ENCODE measurements at regions of chr4 and their contacts with region 1.

Region 1: DNA sequence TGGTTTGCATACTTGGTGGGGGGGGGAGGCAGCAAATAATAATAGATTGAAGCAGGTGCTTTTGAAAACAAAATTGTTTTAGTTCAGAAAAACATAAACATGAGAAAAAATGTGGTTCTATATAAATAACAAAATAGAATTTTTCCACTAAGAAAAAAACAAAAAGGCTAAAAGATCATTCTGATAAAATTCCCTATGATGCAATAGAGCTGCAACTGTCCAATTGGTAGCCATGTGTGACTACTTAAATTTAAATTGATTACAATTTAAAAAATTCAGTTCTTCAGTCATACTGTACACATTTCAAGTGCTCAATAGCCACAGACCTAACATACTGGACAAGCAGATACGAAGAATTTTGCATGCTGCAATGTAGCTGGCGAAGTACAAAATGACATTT is 11.0 kb downstream of the TRMT10A start:
- DNase-seq: no peak
- H3K4me3 Mint-ChIP-seq: no peak overlapping the region
- H3K27ac Mint-ChIP-seq: no peak overlapping the region
- H3K4me1 Mint-ChIP-seq: no peaks in the 10 kb centered on the region
- H3K27me3 Mint-ChIP-seq: no peaks in the 10 kb centered on the region

Region 2: DNA sequence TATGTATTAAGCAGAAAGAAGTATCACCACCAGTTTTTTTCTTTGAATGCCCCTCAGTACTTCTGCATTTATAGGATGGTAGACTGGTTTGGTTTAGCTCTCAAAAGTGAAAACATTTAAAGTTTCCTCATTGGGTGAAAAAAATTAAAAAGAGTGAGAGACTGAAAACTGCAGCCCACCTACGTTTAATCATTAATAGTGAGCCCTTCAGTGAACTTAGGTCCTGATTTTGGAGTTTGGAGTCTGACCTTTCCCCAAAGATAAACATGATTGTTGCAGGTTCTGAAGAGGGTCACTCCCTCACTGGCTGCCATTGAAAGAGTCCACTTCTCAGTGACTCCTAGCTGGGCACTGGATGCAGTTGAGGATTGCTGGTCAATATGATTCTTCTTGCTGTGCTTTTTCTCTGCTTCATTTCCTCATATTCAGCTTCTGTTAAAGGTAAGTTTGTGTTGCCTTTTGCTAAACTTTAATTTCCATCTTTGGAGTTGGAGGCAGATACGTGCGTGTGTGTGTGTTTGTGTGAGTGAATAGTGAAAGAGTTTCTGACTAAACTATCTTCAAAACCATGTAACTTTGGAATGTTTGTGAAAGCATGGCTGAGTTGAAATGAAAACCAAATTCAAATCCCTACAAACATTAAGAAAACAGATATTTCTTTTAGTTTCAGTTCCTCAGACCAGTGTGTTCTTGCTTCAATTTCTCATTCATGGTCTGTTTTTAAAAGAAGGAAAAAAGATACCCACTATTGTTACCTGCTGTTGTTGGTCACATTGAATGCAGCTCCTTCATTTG is 21.9 kb after region 1 on chr4 and contains the start of gene MTTP:
- intact Hi-C with region 1: loop called (anchors 2 kb)
- DNase-seq: no peak
- H3K4me3 Mint-ChIP-seq: no peak within 1 kb of the TSS
- H3K27ac Mint-ChIP-seq: no peak within 1 kb of the TSS
- H3K4me1 Mint-ChIP-seq: no peaks in the 10 kb centered on the region
- H3K27me3 Mint-ChIP-seq: peaks cover 22% of the 10 kb centered on the region
- total RNA-seq, gene MTTP: 0.29 TPM in 1 of 2 replicates, not detected in the other

Region 3: DNA sequence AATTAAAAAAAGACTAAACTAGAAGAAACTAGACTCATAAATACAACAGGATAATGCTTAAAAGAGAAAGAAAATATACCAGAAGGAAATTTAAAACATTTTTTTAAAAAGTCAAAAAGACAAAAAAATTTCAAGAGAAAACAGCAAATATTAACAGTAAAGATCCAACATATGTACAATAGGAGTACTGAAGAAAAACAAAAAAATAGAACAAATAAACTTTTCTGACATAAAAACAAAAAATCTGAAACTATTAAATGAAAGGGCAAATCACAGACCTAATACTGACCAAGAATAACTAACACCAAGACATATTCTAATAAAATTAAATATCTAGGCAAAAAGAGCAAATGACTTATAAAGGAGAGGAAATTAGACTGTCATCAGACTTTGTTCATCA is 382.0 kb after region 1 on chr4:
- intact Hi-C with region 1: no loop called
- DNase-seq: no peak
- H3K4me3 Mint-ChIP-seq: no peak overlapping the region
- H3K27ac Mint-ChIP-seq: no peak overlapping the region
- H3K4me1 Mint-ChIP-seq: peaks cover 14% of the 10 kb centered on the region
- H3K27me3 Mint-ChIP-seq: no peaks in the 10 kb centered on the region

Measured in activated T-helper 1 cell treated with anti-CD3 and anti-CD28 coated beads, Interleukin-12 subunit alpha, Interleukin-12 subunit beta, Interleukin-2, Interleukin-4 antibody, amounts not matched to agents 30 ng/mL and 10 ng/mL and 1 ng/mL, durations not matched to agents 14 hours and 24 hours and 36 hours (primary cell).